Psoas muscle (tissue), 8 donors: ENCODE measurements at regions of chr1 and their contacts with region 1.

Region 1: GRCh38 chr1:61391730-61392129 is 309.4 kb downstream of the NFIA start:
- DNase-seq: no peak
- ATAC-seq: no peak
- H3K4me3 ChIP-seq: no peak overlapping the region
- H3K27ac ChIP-seq: no peak overlapping the region
- H3K4me1 ChIP-seq: peaks cover 18% of the 10 kb centered on the region
- H3K27me3 ChIP-seq: no peaks in the 10 kb centered on the region
- CTCF ChIP-seq: no peak

Region 2: DNA sequence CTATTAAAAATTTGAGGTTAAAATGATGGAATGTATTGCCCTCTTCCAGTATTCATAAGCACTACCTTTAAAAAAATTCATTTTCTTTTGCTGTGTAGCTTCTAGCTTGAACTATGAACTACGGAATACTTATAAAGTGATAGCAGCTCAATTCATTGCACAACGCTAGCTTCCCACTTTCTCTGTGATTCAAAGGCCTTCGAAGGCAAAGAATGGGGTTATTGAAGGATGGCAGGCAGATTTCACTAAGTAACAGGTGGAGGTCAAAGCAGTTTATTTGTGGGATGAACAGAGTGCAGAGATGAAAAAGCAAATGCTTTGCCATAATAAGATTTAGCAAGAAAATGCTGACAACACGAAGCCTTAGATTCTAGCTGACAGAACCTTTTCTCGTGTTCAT is 18.8 kb before region 1 on chr1:
- intact Hi-C with region 1: loop called in 1 of 2 experiments (anchors 2 kb)
- DNase-seq: no peak
- ATAC-seq: no peak
- H3K4me3 ChIP-seq: no peak overlapping the region
- H3K27ac ChIP-seq: no peak overlapping the region
- H3K4me1 ChIP-seq: peaks cover 23% of the 10 kb centered on the region
- H3K27me3 ChIP-seq: no peaks in the 10 kb centered on the region
- CTCF ChIP-seq: no peak